Caco-2 (cell line): ENCODE measurements at regions of chr12 and their contacts with region 1.

Region 1: GRCh38 chr12:89825591-89826449 is 117.2 kb upstream of the ATP2B1 start:
- DNase-seq: no peak
- H3K4me3 ChIP-seq: no peak overlapping the region
- H3K4me3 Mint-ChIP-seq: peak overlapping the region; percentile 17
- H3K27ac Mint-ChIP-seq: peak overlapping the region; percentile 16
- H3K4me1 ChIP-seq: peaks cover 62% of the 10 kb centered on the region
- H3K4me1 Mint-ChIP-seq: peaks cover 48% of the 10 kb centered on the region
- H3K27me3 ChIP-seq: no peaks in the 10 kb centered on the region
- H3K27me3 Mint-ChIP-seq: no peaks in the 10 kb centered on the region
- CTCF ChIP-seq: no peak

Region 2: GRCh38 chr12:89632778-89633177 is 193.0 kb before region 1 on chr12:
- CTCF ChIA-PET with region 1: no interaction called
- POLR2A ChIA-PET with region 1: no interaction called
- intact Hi-C with region 1: loop called (anchors 1 kb)
- DNase-seq: peak in 1 of 2 experiments; percentile 49
- H3K4me3 ChIP-seq: no peak overlapping the region
- H3K4me3 Mint-ChIP-seq: no peak overlapping the region
- H3K27ac Mint-ChIP-seq: no peak overlapping the region
- H3K4me1 ChIP-seq: peaks cover 33% of the 10 kb centered on the region
- H3K4me1 Mint-ChIP-seq: peaks cover 32% of the 10 kb centered on the region
- H3K27me3 ChIP-seq: no peaks in the 10 kb centered on the region
- H3K27me3 Mint-ChIP-seq: no peaks in the 10 kb centered on the region
- CTCF ChIP-seq: no peak

Region 3: DNA sequence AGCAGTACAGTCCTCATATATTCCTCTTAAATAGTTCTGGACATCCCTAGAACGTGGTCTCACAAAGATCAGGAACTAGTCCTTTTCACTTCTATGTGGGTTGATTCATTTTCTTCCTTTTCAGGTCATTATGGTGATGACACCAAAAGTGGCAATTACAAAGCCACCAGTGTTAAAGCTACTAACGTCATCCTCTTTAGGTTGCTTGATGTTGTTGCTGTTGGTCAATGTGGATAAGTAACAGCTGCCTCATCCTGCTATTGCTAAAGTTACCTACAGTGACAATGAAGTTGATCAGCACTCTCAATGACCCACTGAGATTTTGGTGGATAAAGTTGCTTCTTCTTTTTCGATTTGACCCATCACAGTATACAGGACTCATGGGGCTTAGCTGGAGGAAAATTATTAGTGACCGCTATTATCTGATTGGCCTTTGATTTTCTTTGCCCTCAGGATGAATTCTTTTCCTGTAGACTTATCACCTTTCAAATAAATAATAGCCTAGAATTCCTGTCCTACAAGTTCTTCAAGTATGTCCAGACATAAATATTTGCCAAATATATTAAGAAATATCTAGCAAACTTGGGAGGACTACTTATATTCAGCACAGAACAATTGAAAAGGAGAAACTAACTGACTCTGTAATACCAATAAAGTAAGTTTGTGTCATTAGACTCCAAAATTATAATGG is 63.2 kb before region 1 on chr12:
- CTCF ChIA-PET with region 1: no interaction called
- POLR2A ChIA-PET with region 1: no interaction called
- intact Hi-C with region 1: loop called (anchors 5 kb)
- DNase-seq: peak in 1 of 2 experiments; percentile 39
- H3K4me3 ChIP-seq: no peak overlapping the region
- H3K4me3 Mint-ChIP-seq: no peak overlapping the region
- H3K27ac Mint-ChIP-seq: no peak overlapping the region
- H3K4me1 ChIP-seq: peaks cover 14% of the 10 kb centered on the region
- H3K4me1 Mint-ChIP-seq: no peaks in the 10 kb centered on the region
- H3K27me3 ChIP-seq: no peaks in the 10 kb centered on the region
- H3K27me3 Mint-ChIP-seq: no peaks in the 10 kb centered on the region
- CTCF ChIP-seq: no peak

Region 4: DNA sequence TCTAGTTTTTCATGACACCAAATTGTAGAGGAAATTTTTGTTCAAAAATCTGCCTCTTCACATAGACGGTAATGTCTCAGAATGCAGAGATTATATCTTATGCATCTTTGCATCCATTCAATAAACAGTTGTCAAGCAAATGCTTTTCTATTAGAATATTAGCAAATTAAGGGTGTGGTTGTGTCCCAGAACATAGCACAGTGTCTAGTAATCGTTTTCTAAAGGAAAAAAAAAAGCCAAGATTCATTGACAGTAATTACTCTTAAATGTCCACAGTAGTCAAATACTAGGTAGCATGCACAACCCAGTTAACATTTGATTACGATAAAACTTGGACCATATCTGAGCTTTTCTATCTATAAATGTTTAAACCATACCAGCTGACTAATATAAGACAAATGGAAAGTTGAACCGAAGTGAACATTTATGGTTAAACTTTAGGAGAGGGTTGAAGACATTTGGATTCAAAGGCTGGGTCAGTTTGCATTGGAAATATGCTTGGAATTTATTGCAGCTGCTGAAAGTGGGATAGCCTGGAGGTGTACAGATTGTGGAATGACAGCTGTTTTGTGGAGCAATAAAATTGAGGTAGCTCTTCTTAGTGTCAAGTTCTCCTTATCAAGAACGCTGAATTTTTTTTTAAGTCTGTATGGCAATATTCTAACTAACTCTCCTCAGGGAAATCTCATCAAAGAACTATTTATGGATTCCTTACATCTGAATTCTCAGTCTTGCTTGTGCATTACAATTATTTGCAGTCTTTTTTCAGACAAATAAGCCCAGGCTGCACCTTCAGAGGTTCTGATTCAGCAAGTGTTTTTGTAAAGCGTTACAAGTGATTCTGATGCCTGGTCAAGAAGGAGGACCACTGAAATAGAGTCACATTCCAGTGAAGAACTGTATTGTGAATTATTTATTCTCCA is 50.5 kb before region 1 on chr12:
- CTCF ChIA-PET with region 1: no interaction called
- POLR2A ChIA-PET with region 1: interaction called, 4 read pairs
- intact Hi-C with region 1: loop called (anchors 1 kb)
- DNase-seq: peak; percentile 74 to 77
- H3K4me3 ChIP-seq: no peak overlapping the region
- H3K4me3 Mint-ChIP-seq: peak overlapping the region; percentile 41
- H3K27ac Mint-ChIP-seq: peak overlapping the region; percentile 72
- H3K4me1 ChIP-seq: peaks cover 47% of the 10 kb centered on the region
- H3K4me1 Mint-ChIP-seq: peaks cover 41% of the 10 kb centered on the region
- H3K27me3 ChIP-seq: no peaks in the 10 kb centered on the region
- H3K27me3 Mint-ChIP-seq: no peaks in the 10 kb centered on the region
- CTCF ChIP-seq: no peak

Region 5: DNA sequence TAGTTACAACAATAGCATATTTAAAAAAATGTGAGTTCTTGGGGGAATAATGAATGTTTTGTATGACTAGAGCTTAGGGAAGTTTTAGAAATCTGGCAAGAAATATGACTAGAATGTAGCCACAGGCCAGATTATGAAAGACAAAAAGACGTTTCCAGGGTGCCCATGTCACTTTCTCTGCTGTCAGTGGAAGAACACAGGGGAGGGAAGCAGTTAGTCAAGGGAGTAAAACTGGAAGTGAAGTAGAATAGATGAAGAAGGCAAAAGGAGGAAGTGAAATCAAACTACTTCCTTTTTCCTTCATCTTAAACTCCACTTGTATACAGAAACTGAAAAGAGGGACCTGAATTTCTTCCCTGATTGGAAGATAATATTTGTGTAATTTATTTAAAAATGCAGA is 36.0 kb before region 1 on chr12:
- CTCF ChIA-PET with region 1: no interaction called
- POLR2A ChIA-PET with region 1: no interaction called
- intact Hi-C with region 1: no loop called
- DNase-seq: no peak
- H3K4me3 ChIP-seq: no peak overlapping the region
- H3K4me3 Mint-ChIP-seq: no peak overlapping the region
- H3K27ac Mint-ChIP-seq: no peak overlapping the region
- H3K4me1 ChIP-seq: peaks cover 15% of the 10 kb centered on the region
- H3K4me1 Mint-ChIP-seq: peaks cover 5% of the 10 kb centered on the region
- H3K27me3 ChIP-seq: no peaks in the 10 kb centered on the region
- H3K27me3 Mint-ChIP-seq: no peaks in the 10 kb centered on the region
- CTCF ChIP-seq: no peak

Region 6: DNA sequence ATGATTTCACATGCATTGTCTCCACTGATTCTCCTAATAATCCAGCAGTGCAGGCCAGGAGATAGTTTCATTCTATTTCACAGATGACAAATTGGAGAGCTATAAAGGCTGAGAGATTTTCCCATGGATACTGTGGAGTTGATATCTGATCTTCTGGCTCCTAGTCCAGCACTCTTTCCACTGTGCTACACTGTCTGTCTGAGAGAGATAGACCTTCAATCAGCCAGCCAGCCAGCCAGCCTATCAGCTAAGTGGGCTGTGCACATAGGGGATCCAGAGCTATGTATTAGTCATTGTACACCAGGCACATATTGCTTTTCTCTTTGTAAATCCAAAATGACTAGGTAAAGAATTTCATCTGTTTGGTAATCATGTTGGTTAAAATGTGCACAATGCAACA is 25.4 kb before region 1 on chr12:
- CTCF ChIA-PET with region 1: no interaction called
- POLR2A ChIA-PET with region 1: no interaction called
- intact Hi-C with region 1: loop called (anchors 1 kb)
- DNase-seq: no peak
- H3K4me3 ChIP-seq: no peak overlapping the region
- H3K4me3 Mint-ChIP-seq: no peak overlapping the region
- H3K27ac Mint-ChIP-seq: no peak overlapping the region
- H3K4me1 ChIP-seq: peaks cover 51% of the 10 kb centered on the region
- H3K4me1 Mint-ChIP-seq: peaks cover 10% of the 10 kb centered on the region
- H3K27me3 ChIP-seq: no peaks in the 10 kb centered on the region
- H3K27me3 Mint-ChIP-seq: no peaks in the 10 kb centered on the region
- CTCF ChIP-seq: no peak

Region 7: GRCh38 chr12:90262251-90262650 is 436.4 kb after region 1 on chr12:
- CTCF ChIA-PET with region 1: no interaction called
- POLR2A ChIA-PET with region 1: no interaction called
- intact Hi-C with region 1: loop called (anchors 10 kb)
- DNase-seq: no peak
- H3K4me3 ChIP-seq: no peak overlapping the region
- H3K4me3 Mint-ChIP-seq: no peak overlapping the region
- H3K27ac Mint-ChIP-seq: no peak overlapping the region
- H3K4me1 ChIP-seq: peaks cover 10% of the 10 kb centered on the region
- H3K4me1 Mint-ChIP-seq: peaks cover 25% of the 10 kb centered on the region
- H3K27me3 ChIP-seq: no peaks in the 10 kb centered on the region
- H3K27me3 Mint-ChIP-seq: no peaks in the 10 kb centered on the region
- CTCF ChIP-seq: no peak